Gastrocnemius medialis (tissue), 4 donors: ENCODE measurements at regions of chr20 and their contacts with region 1.

Region 1: DNA sequence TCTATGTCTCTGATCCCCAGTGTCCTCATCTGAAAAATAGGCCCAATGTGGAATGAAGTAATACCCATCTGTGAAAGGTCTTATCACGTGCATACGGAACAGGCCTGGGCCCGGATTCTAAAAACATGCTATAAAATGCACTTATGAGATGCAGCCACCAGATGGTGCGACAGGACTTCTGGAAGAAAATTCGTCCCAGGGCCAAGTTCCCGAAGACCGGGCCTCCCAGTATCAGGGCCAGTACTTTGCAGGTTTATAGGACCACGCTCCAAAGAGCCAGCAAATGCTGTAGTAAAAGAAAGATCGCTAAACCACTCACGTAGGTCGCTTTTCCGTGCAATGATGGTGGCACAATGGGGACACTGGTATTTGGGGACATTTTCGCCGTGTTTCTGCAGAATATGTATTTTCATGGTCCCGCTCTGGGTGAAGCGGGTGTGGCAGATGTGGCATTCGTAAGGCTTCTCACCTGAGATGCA is 10.6 kb downstream of the CTCFL start:
- DNase-seq: peak; percentile 49 to 53
- ATAC-seq: peak; percentile 62 to 81
- H3K4me3 ChIP-seq: no peak overlapping the region
- H3K27ac ChIP-seq: no peak overlapping the region
- H3K4me1 ChIP-seq: peaks cover 0 to 5% of the 10 kb centered on the region in 2 donors
- H3K27me3 ChIP-seq: no peaks in the 10 kb centered on the region
- CTCF ChIP-seq: peak; percentile 63 to 82 (median 75)
- POLR2A ChIP-seq: no peak

Region 2: GRCh38 chr20:57718490-57719271 is 204.4 kb after region 1 on chr20:
- in situ Hi-C with region 1: no loop called
- intact Hi-C with region 1: loop called (anchors 2 kb)
- DNase-seq: peak; percentile 97 to 98
- ATAC-seq: peak; percentile 92 to 96
- H3K4me3 ChIP-seq: peak overlapping the region; percentile 32 to 45 (median 36)
- H3K27ac ChIP-seq: peak overlapping the region; percentile 21 to 79 (median 57)
- H3K4me1 ChIP-seq: peaks cover 49 to 54% of the 10 kb centered on the region in 2 donors
- H3K27me3 ChIP-seq: no peaks in the 10 kb centered on the region
- CTCF ChIP-seq: no peak
- POLR2A ChIP-seq: no peak

Region 3: GRCh38 chr20:58209652-58210397 is 695.5 kb after region 1 on chr20:
- in situ Hi-C with region 1: loop called (anchors 5 to 10 kb)
- intact Hi-C with region 1: loop called (anchors 1 kb)
- DNase-seq: peak; percentile 46 to 58
- ATAC-seq: peak; percentile 47 to 80
- H3K4me3 ChIP-seq: no peak overlapping the region
- H3K27ac ChIP-seq: no peak overlapping the region
- H3K4me1 ChIP-seq: no peaks in the 10 kb centered on the region
- H3K27me3 ChIP-seq: peaks cover 0 to 7% (median 3%) of the 10 kb centered on the region in 3 donors
- CTCF ChIP-seq: peak; percentile 99 to 100 (median 100)
- POLR2A ChIP-seq: no peak